ENCODE measurements at regions of chr19 and their contacts with region 1.

Region 1: GRCh38 chr19:4732680-4733114 is 9.1 kb upstream of the DPP9 start:
- DNase-seq: peak; percentile 29
- ATAC-seq: peak; percentile 97
- H3K4me3 Mint-ChIP-seq: peak overlapping the region; percentile 36
- H3K27ac Mint-ChIP-seq: no peak overlapping the region
- H3K4me1 Mint-ChIP-seq: peaks cover 4% of the 10 kb centered on the region
- H3K27me3 Mint-ChIP-seq: peaks cover 3% of the 10 kb centered on the region
- CTCF ChIP-seq: no peak

Region 2: DNA sequence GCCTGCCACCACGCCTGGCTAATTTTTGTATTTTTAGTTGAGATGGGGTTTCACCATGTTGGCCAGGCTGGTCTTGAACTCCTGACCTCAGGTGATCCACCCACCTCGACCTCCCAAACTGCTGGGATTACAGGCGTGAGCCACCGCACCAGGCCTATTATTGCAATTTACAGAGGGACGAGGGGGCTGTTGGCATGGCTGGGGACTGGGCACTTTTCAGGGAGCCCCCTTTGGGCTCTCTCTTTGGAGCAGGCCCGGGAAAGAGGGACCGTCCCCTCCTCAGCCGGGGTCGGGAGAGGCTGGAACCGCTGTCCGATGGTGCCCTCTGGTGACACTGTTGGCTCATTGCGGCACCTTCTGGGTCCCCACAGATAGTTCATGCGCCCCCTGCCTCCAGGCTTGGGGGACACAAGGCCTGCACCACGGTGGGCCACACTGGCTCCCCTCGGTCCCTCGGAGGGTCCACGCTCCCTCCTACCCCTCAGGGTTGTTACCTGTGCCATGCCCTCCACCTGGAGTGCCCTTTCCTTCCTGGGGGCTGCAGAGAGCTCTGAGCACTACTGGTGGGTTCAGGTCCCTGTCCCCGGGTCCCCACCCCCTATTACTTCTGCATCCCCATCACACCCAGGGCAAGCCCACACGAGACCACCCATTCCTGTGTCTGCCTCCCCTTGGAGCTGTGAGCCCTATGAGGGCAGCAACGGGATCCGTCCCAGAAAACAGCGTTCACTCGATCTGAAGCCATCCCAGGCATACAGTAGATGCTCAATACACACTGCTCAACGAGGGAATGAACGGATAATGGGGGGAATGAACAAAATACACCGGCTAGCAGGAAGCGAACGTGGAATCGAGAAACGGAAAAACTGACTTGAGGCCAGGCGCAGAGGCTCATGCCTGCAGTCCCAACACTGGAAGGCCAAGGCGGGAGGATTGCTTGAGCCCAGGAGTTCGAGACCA is 71.3 kb after region 1 on chr19:
- CTCF ChIA-PET with region 1: interaction called, 4 read pairs
- POLR2A ChIA-PET with region 1: no interaction called
- intact Hi-C with region 1: loop called (anchors 1 kb)
- DNase-seq: peak; percentile 55
- ATAC-seq: peak; percentile 94
- H3K4me3 Mint-ChIP-seq: no peak overlapping the region
- H3K27ac Mint-ChIP-seq: no peak overlapping the region
- H3K4me1 Mint-ChIP-seq: peaks cover 15% of the 10 kb centered on the region
- H3K27me3 Mint-ChIP-seq: no peaks in the 10 kb centered on the region
- CTCF ChIP-seq: peak; percentile 52

Region 3: GRCh38 chr19:4851551-4852290 is 119.0 kb after region 1 on chr19:
- CTCF ChIA-PET with region 1: no interaction called
- POLR2A ChIA-PET with region 1: no interaction called
- intact Hi-C with region 1: loop called (anchors 5 kb)
- DNase-seq: peak; percentile 77
- ATAC-seq: peak; percentile 94
- H3K4me3 Mint-ChIP-seq: no peak overlapping the region
- H3K27ac Mint-ChIP-seq: no peak overlapping the region
- H3K4me1 Mint-ChIP-seq: peaks cover 17% of the 10 kb centered on the region
- H3K27me3 Mint-ChIP-seq: no peaks in the 10 kb centered on the region
- CTCF ChIP-seq: peak; percentile 63

Region 4: GRCh38 chr19:5031231-5032100 is 298.8 kb after region 1 on chr19:
- CTCF ChIA-PET with region 1: interaction called, 6 read pairs
- POLR2A ChIA-PET with region 1: no interaction called
- intact Hi-C with region 1: loop called (anchors 1 kb)
- DNase-seq: peak; percentile 85
- ATAC-seq: peak; percentile 94
- H3K4me3 Mint-ChIP-seq: no peak overlapping the region
- H3K27ac Mint-ChIP-seq: no peak overlapping the region
- H3K4me1 Mint-ChIP-seq: peaks cover 17% of the 10 kb centered on the region
- H3K27me3 Mint-ChIP-seq: no peaks in the 10 kb centered on the region
- CTCF ChIP-seq: peak; percentile 33